Left cardiac atrium (tissue), 4 donors: ENCODE measurements at regions of chr18 and their contacts with region 1.

Region 1: DNA sequence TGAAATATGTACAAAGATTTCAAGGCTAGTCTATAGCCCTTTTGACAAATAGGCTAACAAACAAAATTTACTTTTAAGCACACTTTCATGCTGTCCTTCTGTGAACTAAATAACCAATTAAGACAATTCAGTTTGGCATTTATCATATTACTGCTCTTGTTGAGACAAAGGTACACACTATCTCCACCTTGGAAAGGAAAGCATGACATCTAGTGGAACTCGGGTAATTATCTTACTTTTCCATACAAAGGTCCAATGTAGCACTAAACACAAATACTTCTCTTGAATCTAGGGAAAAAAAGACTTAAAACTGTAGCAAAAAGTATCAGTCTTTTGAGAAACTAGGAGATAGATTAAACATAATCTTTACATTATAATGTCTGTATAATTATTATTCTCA is 125.0 kb upstream of the CD226 start:
- DNase-seq: no peak
- ATAC-seq: no peak

Region 2: GRCh38 chr18:69636529-69637301 is 436.0 kb before region 1 on chr18:
- intact Hi-C with region 1: loop called in 1 of 2 experiments (anchors 5 kb)
- DNase-seq: no peak
- ATAC-seq: peak; percentile 30 to 54

Region 3: DNA sequence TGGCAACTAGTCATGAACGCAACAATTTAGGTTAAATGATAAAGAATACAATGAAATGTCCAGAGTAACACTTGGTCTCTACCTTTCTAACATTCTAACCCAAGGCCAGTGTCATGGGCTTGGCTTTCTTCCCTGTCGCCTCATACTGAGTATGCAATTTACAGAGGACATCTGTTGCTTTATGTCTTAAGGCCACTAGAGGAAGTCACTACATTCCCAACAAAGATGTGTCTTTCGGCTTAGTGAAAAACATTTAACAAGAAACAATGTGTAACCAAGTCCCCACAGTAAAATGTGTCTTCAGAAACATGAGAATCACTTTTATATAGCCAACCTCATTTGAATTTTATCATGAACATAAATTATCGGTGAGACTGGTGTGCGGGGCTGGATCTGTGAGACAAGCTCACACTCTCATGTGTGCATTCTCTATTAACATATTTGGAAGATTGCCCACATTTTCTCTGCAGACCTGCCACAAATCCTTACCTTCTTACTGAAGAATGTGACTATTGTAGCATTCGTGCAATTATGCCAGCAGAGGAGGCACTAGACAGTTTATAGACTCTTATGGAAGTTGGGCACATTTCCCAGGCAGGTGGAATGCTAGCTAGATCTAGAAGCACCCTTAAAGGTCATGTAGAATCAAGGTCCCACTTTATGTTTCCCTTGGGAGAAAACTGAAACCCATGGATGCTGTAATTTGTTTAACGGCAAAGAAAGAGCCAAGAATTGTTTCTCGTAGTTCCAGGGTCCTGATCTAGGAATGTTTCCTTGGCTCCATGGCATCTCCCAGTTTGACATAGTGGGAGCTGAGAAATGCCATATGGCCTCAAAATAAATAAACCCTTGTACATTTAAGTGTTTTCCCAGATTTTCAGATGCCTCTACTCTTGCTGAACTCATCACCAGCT is 226.8 kb before region 1 on chr18:
- intact Hi-C with region 1: loop called in 1 of 2 experiments (anchors 10 kb)
- DNase-seq: no peak
- ATAC-seq: no peak

Region 4: GRCh38 chr18:70165936-70166335 is 93.3 kb after region 1 on chr18:
- intact Hi-C with region 1: no loop called
- DNase-seq: no peak
- ATAC-seq: no peak